Activated CD4-positive, alpha-beta T cell treated with anti-CD3 and anti-CD28 coated beads for 36 hours (primary cell): ENCODE measurements at regions of chr11 and their contacts with region 1.

Region 1: GRCh38 chr11:72069787-72070251 is 10.5 kb downstream of the NUMA1 start:
- DNase-seq: peak; percentile 22
- ATAC-seq: peak; percentile 65
- H3K4me3 Mint-ChIP-seq: no peak overlapping the region
- H3K27ac Mint-ChIP-seq: peak overlapping the region; percentile 35
- H3K4me1 Mint-ChIP-seq: peaks cover 46% of the 10 kb centered on the region
- H3K27me3 Mint-ChIP-seq: no peaks in the 10 kb centered on the region

Region 2: GRCh38 chr11:72024069-72024754 is 45.6 kb before region 1 on chr11:
- CTCF ChIA-PET with region 1: interaction called, 14 read pairs
- POLR2A ChIA-PET with region 1: interaction called, 3 read pairs
- intact Hi-C with region 1: no loop called
- DNase-seq: no peak
- ATAC-seq: no peak
- H3K4me3 Mint-ChIP-seq: no peak overlapping the region
- H3K27ac Mint-ChIP-seq: peak overlapping the region; percentile 60
- H3K4me1 Mint-ChIP-seq: peaks cover 31% of the 10 kb centered on the region
- H3K27me3 Mint-ChIP-seq: no peaks in the 10 kb centered on the region

Region 3: DNA sequence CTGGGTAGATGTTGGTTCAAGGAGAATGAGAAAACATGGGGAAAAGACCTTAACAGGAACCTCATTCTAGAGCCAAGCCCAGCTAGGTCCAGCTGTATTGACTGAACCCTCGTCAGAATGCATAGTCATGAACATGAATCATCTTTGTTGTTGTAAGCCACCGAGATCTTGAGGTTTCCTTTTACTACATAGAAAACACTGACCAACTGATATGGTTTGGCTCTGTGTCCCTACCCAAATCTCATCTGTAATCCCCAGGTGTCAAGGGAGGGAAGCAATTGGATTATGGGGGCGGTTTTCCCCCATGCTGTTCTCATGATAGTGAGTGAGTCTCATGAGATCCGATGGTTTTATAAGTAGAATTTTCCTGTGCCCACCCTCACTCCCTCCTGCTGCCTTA is 193.5 kb after region 1 on chr11:
- CTCF ChIA-PET with region 1: no interaction called
- POLR2A ChIA-PET with region 1: no interaction called
- intact Hi-C with region 1: no loop called
- DNase-seq: no peak
- ATAC-seq: no peak
- H3K4me3 Mint-ChIP-seq: no peak overlapping the region
- H3K27ac Mint-ChIP-seq: no peak overlapping the region
- H3K4me1 Mint-ChIP-seq: no peaks in the 10 kb centered on the region
- H3K27me3 Mint-ChIP-seq: peaks cover 16% of the 10 kb centered on the region